GM18951 (cell line): ENCODE measurements at regions of chr10 and their contacts with region 1.

Region 1: GRCh38 chr10:15879058-15879457 is 18.8 kb upstream of the MINDY3 start:
- POLR2A ChIP-seq: no peak

Region 2: DNA sequence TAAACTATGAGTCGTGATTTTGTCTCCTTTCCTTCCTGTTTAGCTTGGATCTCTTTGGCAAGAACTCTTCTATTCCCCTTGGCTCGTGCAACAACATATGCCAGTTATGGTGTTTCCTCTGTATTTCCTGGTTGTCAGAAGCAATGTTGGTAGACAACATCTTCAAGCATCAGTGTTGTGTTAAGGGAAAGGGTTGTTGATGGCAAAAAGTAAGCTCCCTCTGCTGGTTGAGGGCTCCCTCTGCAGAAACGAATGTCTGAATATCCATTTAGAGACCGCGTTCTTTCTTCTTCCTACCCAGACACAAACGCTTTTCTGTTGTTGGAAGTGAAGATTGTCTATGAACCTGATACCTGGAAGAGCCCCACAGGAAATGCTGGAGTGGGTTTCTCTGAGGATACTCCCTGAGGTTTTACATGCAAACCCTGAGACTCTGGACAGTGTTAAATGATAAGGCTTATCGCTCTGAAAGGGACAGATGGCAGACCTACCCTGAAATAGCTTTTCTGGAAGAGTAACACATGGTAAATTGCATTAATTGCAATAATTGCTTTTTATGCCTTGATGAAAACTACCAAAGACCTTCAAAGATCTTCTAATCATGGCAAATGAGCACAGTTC is 666.2 kb after region 1 on chr10:
- in situ Hi-C with region 1: loop called (anchors 25 kb)
- POLR2A ChIP-seq: no peak

Region 3: DNA sequence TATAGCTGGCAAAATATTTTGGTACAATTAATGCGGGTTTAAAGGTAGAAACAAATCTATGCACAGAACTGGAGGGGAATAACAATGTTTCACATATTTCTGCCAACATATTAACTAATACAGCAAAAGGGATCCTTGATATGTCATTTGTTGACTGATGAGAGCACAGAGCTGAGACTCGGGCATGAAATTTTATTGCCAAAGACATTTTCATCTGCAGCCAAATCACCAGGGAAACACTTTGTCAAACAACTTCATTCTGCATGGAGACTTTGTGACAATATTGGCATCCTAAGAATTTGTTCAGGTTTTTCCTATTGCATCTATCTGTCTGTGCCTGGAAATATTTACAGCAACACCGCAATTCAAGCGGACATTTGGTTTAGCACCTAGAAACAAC is 760.4 kb after region 1 on chr10:
- in situ Hi-C with region 1: no loop called
- POLR2A ChIP-seq: no peak

Region 4: GRCh38 chr10:16777473-16778370 is 898.7 kb after region 1 on chr10:
- in situ Hi-C with region 1: loop called (anchors 25 kb)
- POLR2A ChIP-seq: no peak